Heart left ventricle (tissue), 16 donors: ENCODE measurements at regions of chr11 and their contacts with region 1.

Region 1: DNA sequence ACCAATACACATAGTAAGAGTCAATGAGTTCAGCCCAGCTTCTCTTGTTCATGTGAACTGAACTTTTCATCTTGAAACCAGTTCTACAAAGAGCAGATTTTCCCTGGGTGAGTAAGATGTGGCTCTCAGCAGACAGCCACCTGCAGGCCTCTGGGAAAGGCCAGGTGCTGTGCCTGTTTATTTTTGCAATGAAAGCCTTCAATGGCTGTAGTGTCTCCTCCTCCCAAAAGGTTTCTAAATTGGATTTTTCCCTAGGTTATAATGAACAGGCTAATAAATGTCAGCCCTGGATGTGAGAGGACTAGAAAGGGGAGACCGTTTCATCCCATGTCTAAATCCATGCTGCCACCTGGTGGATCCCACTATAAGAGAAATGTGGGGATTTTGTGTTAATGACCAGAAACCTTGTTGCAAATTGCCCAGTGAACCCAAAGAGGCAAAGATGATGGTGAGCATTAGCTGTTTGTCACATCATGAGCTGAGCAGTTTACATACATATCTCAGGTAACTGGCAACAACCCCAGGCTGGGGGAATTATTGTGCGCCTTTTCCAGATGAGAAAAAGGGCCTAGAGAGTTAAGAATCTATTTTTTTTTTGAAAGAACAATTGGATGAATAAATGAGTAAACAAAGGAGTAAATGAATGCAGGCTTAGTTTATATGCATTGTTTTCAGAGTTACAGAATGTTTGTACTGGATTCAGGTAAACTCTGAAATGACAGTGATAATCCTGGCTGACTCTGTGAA is 12.7 kb downstream of the C11orf91 start:
- DNase-seq: no peak
- ATAC-seq: no peak
- H3K4me3 ChIP-seq: no peak overlapping the region
- H3K27ac ChIP-seq: peak overlapping the region in 2 of 12 donors; percentile 80 to 87
- H3K4me1 ChIP-seq: peaks cover 10 to 46% (median 37%) of the 10 kb centered on the region in 12 donors
- H3K27me3 ChIP-seq: no peaks in the 10 kb centered on the region
- CTCF ChIP-seq: peak; percentile 45 to 81 (median 74)
- POLR2A ChIP-seq: no peak

Region 2: GRCh38 chr11:32960553-32961164 is 727.2 kb before region 1 on chr11:
- intact Hi-C with region 1: loop called in 1 of 10 experiments (anchors 10 kb)
- DNase-seq: no peak
- ATAC-seq: no peak
- H3K4me3 ChIP-seq: no peak overlapping the region
- H3K27ac ChIP-seq: no peak overlapping the region
- H3K4me1 ChIP-seq: peaks cover 0 to 4% (median 0%) of the 10 kb centered on the region in 12 donors
- H3K27me3 ChIP-seq: no peaks in the 10 kb centered on the region
- CTCF ChIP-seq: peak; percentile 51 to 77 (median 66)
- POLR2A ChIP-seq: no peak

Region 3: DNA sequence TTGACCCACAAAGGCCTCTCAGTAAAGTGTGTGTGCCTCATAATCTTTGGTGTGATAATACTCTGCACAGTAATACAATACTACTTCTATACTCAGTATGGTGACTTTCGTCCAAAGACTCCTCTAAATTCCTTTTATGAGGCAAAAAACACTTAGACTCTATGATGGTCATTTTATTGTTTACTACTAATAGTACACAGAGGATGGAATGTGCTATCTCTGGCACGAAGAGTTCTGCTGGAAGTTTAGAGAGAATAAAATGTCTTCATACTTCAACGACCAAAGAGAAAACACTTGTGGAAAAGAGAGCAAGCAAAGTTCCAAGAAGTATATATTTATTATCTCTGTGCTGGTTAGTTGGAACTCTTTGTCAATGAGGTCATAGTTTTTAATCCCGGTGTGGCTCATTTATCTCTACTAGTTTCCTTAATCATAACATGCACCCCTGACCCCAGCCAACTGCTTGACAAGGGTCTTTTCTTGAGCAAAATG is 519.2 kb before region 1 on chr11:
- intact Hi-C with region 1: loop called in 9 of 10 experiments (anchors 5 to 10 kb)
- DNase-seq: no peak
- ATAC-seq: peak in 3 of 4 donors; percentile 28 to 52 (median 29)
- H3K4me3 ChIP-seq: no peak overlapping the region
- H3K27ac ChIP-seq: peak overlapping the region in 1 of 12 donors; percentile 33
- H3K4me1 ChIP-seq: peaks cover 0 to 20% (median 5%) of the 10 kb centered on the region in 12 donors
- H3K27me3 ChIP-seq: no peaks in the 10 kb centered on the region
- CTCF ChIP-seq: no peak
- POLR2A ChIP-seq: no peak

Region 4: GRCh38 chr11:33362051-33362910 is 325.6 kb before region 1 on chr11:
- intact Hi-C with region 1: loop called (anchors 1 to 5 kb)
- DNase-seq: no peak
- ATAC-seq: peak in 3 of 4 donors; percentile 20 to 48 (median 33)
- H3K4me3 ChIP-seq: no peak overlapping the region
- H3K27ac ChIP-seq: no peak overlapping the region
- H3K4me1 ChIP-seq: peaks cover 0 to 15% (median 2%) of the 10 kb centered on the region in 12 donors
- H3K27me3 ChIP-seq: no peaks in the 10 kb centered on the region
- CTCF ChIP-seq: peak; percentile 62 to 86 (median 76)
- POLR2A ChIP-seq: no peak

Region 5: GRCh38 chr11:33700425-33701271 is 12.7 kb after region 1 on chr11 and contains the start of gene C11orf91:
- intact Hi-C with region 1: loop called in 1 of 10 experiments (anchors 1 kb)
- DNase-seq: peak; percentile 98 to 99 (median 99)
- ATAC-seq: peak; percentile 69 to 89 (median 84)
- H3K4me3 ChIP-seq: peak within 1 kb of the TSS; percentile 36 to 66 (median 53)
- H3K27ac ChIP-seq: peak within 1 kb of the TSS; percentile 61 to 94 (median 88)
- H3K4me1 ChIP-seq: peaks cover 11 to 84% (median 52%) of the 10 kb centered on the region in 12 donors
- H3K27me3 ChIP-seq: no peaks in the 10 kb centered on the region
- CTCF ChIP-seq: no peak
- POLR2A ChIP-seq: peak in 1 of 2 donors; percentile 56
- total RNA-seq, gene C11orf91: 0.56 to 1.00 (median 0.70) TPM in 4 of 9 donors, not detected in the others

Region 6: GRCh38 chr11:33742249-33742851 is 54.4 kb after region 1 on chr11:
- intact Hi-C with region 1: loop called in 4 of 10 experiments (anchors 2 to 5 kb)
- DNase-seq: no peak
- ATAC-seq: peak in 3 of 4 donors; percentile 14 to 49 (median 39)
- H3K4me3 ChIP-seq: no peak overlapping the region
- H3K27ac ChIP-seq: peak overlapping the region in 2 of 12 donors; percentile 1 to 58
- H3K4me1 ChIP-seq: peaks cover 0 to 30% (median 10%) of the 10 kb centered on the region in 12 donors
- H3K27me3 ChIP-seq: no peaks in the 10 kb centered on the region
- CTCF ChIP-seq: peak; percentile 32 to 76 (median 60)
- POLR2A ChIP-seq: no peak